Activated naive CD4-positive, alpha-beta T cell treated with anti-CD3 and anti-CD28 coated beads for 36 hours (primary cell): ENCODE measurements at regions of chr3 and their contacts with region 1.

Region 1: DNA sequence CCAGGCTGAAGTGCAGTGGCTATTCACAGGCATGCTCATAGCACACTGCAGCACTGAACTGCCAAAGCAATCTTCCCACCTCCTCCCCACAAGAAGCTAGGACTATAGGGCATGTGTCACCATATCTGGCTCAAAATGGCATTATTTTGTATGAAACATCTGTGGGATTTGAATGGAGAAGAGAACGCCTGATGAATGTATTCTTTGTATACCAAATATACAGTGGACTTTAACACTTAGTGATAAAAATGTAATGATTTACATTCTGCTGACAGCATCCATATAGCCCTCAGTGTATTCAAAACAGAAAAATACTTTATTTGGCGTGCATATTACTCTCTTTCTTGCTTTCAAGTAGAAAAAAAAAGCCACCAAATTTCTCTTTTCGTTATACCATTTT is 257.8 kb downstream of the FOXP1 start:
- DNase-seq: no peak
- H3K4me3 Mint-ChIP-seq: no peak overlapping the region
- H3K27ac Mint-ChIP-seq: no peak overlapping the region
- H3K4me1 Mint-ChIP-seq: peaks cover 23% of the 10 kb centered on the region
- H3K27me3 Mint-ChIP-seq: no peaks in the 10 kb centered on the region

Region 2: DNA sequence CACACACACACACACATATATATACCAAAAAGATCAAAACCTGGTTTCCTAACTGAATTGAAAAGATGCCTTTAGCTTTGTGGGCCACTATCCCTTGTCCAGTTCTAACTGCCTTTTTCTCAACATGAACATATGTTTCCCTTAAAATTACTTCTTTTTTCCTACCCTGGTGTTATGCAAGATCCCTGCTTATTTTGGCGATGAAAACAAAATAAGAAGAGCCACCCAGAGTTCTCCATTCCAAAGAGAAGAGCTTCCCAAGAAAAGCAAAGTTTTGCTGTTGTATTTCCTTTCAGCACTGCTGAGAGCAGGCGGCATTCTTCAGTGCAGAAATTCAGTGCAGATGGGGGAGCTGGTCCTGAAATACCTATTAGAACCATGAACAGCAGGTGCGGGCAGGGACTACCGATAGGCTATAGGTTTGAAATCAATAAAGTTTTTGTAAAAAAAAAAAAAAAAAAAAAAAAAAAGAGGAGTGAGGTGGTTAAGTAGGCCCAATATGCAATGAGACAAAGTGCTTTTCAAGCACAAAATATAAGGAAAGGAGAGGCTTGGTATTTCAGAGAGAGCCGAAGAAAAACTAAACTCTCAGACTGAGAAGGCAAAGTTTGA is 19.8 kb after region 1 on chr3:
- CTCF ChIA-PET with region 1: interaction called, 5 read pairs
- intact Hi-C with region 1: loop called (anchors 2 kb)
- DNase-seq: no peak
- H3K4me3 Mint-ChIP-seq: no peak overlapping the region
- H3K27ac Mint-ChIP-seq: peak overlapping the region; percentile 37
- H3K4me1 Mint-ChIP-seq: peaks cover 50% of the 10 kb centered on the region
- H3K27me3 Mint-ChIP-seq: no peaks in the 10 kb centered on the region